ENCODE measurements at regions of chr9 and their contacts with region 1.

Region 1: DNA sequence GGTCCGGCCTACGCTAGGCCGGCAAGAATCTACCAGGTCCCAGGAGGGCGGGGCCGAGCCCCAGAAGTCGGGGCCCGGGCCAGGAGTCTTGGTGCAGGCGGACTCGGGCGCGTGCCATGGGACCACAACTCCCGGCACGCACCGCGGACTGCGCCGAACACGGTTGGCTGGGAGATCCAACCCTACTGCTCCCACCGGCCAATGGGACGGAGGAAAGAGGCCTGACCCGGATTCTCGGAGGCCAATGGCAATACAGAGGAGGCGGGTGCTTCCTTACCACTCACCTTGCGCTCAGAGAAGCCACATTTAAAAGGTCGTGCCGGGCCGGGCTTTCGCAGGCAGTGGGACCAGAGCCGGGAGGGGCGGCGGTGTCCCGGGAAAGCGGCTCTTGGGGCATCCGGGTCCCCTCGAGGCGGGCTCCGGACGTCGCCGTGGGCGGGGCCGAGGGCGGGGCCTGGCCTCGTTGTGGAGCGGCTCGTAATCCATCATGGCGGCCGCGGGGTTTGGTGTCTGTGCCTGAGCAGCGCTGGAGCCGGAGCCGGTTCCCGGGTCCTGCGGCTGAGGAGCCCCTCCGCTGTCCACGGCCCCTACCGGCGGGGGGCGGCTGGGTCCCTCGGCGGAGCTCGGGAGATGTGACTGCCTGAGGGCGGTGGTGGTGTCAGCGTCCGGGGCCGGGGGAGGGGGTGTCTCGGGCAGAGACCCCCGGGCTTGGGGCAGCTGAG is 19.1 kb downstream of the EXOSC2 start:
- DNase-seq: peak; percentile 99

Region 2: GRCh38 chr9:130770679-130771442 is 58.1 kb after region 1 on chr9:
- intact Hi-C with region 1: loop called (anchors 2 kb)
- DNase-seq: no peak

Region 3: GRCh38 chr9:130847327-130848217 is 134.8 kb after region 1 on chr9:
- intact Hi-C with region 1: no loop called
- DNase-seq: peak; percentile 81